Transverse colon (tissue), 4 donors: ENCODE measurements at regions of chr1 and their contacts with region 1.

Region 1: GRCh38 chr1:153577624-153578051 is 12.0 kb upstream of the S100A2 start:
- DNase-seq: peak; percentile 63
- H3K4me3 ChIP-seq: no peak overlapping the region
- H3K27ac ChIP-seq: no peak overlapping the region
- H3K4me1 ChIP-seq: peaks cover 5 to 24% (median 9%) of the 10 kb centered on the region in 4 donors
- H3K27me3 ChIP-seq: no peaks in the 10 kb centered on the region
- CTCF ChIP-seq: no peak
- EP300 ChIP-seq: no peak
- POLR2A ChIP-seq: no peak

Region 2: DNA sequence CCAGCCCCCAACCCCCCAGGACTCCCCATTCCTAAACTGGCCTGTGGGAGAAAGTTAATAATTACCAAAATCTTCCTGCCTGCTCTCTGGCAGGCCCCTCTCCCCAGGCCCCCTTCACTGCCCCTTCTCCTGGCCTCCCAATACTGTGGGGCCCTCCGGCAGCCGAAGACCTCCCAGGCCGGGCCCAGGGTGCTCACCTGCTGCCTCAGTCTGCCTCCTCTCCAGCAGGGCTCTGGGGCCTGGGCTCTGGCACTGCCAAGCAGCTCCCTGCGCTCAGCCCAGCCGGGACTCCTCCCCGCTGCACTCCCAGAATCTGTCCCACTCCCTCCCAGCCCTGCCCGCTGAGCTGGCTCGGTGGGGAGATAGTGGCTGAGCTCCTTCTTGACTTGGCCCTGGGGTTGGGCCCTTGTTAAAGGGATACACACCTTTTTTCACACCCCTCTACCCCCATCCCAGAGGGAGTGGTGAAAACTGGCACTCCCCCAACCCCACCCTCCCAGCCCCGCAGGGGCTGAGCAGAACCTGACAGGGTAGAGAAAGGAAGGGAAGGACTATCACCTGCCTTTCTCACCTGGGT is 35.2 kb after region 1 on chr1 and contains the start of gene S100A16:
- in situ Hi-C with region 1: no loop called
- intact Hi-C with region 1: loop called (anchors 5 kb)
- DNase-seq: peak; percentile 91
- H3K4me3 ChIP-seq: peak within 1 kb of the TSS; percentile 53 to 69 (median 60)
- H3K27ac ChIP-seq: peak within 1 kb of the TSS; percentile 89 to 97 (median 92)
- H3K4me1 ChIP-seq: peaks cover 45 to 79% (median 60%) of the 10 kb centered on the region in 4 donors
- H3K27me3 ChIP-seq: no peaks in the 10 kb centered on the region
- CTCF ChIP-seq: peak in 1 of 5 experiments; percentile 13
- EP300 ChIP-seq: no peak
- POLR2A ChIP-seq: peak; percentile 97
- total RNA-seq, gene S100A16: 181 to 223 (median 196) TPM